ENCODE measurements at regions of chr16 and their contacts with region 1.

Region 1: DNA sequence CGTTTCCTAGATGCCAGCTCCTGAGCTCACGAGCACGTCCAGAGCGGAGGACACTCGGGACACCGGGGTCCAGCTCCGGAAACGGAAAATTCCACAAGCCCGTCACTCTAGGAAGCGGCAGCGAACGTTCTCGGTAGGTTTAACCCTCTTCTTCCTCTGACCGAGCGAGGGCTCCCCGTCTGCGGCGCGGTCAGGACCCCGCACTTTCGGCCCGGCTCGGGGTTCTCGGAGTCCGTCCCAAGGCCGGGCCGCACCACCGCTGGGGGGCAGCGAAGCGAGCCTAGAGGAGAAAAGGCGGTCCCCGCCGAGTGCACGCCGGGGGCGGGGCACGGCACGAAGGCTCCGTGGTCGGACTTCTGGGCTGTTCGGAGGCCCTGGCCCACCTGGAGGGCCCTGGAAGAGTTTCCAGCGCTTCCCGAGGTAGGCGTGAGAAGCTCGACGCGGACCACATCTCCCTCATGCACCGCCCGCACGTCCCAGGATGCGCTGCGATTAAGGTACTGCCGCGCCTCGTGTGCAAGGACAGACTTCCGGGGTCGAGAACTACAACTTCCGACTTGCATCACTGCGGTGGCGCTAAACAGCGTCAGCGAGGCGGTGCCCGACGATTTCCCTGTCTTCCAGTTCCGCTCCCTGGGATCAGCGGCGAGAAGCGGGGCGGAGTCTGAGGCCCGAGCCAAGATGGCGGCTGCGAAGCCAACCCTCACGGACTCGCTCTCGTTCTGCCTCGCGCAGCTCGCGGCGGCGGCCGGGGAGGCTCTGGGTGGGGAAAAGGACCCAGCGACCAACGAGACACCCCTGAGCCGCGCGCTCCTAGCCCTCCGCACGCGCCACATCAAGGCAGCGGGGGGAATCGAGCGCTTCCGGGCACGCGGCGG is at the start of gene ARMC5:
- DNase-seq: peak; percentile 93
- ATAC-seq: peak; percentile 75
- H3K4me3 Mint-ChIP-seq: peak within 1 kb of the TSS; percentile 91
- H3K27ac Mint-ChIP-seq: peak within 1 kb of the TSS; percentile 98
- H3K4me1 Mint-ChIP-seq: peaks cover 50% of the 10 kb centered on the region
- H3K27me3 Mint-ChIP-seq: no peaks in the 10 kb centered on the region
- CTCF ChIP-seq: no peak
- total RNA-seq, gene ARMC5: 10.9 TPM in 2 replicates

Region 2: GRCh38 chr16:30957456-30958174 is 501.5 kb before region 1 on chr16 and contains the start of gene SETD1A:
- CTCF ChIA-PET with region 1: no interaction called
- POLR2A ChIA-PET with region 1: interaction called, 4 read pairs
- intact Hi-C with region 1: loop called (anchors 1 kb)
- DNase-seq: peak; percentile 89
- ATAC-seq: peak; percentile 87
- H3K4me3 Mint-ChIP-seq: peak within 1 kb of the TSS; percentile 95
- H3K27ac Mint-ChIP-seq: peak within 1 kb of the TSS; percentile 99
- H3K4me1 Mint-ChIP-seq: peaks cover 31% of the 10 kb centered on the region
- H3K27me3 Mint-ChIP-seq: no peaks in the 10 kb centered on the region
- CTCF ChIP-seq: no peak
- total RNA-seq, gene SETD1A: 29.6 and 32.8 TPM in 2 replicates

Region 3: GRCh38 chr16:31117391-31118197 is 341.5 kb before region 1 on chr16 and contains the start of gene KAT8:
- CTCF ChIA-PET with region 1: no interaction called
- POLR2A ChIA-PET with region 1: interaction called, 14 read pairs
- intact Hi-C with region 1: loop called (anchors 2 kb)
- DNase-seq: peak; percentile 92
- ATAC-seq: peak; percentile 94
- H3K4me3 Mint-ChIP-seq: peak within 1 kb of the TSS; percentile 85
- H3K27ac Mint-ChIP-seq: peak within 1 kb of the TSS; percentile 85
- H3K4me1 Mint-ChIP-seq: peaks cover 22% of the 10 kb centered on the region
- H3K27me3 Mint-ChIP-seq: no peaks in the 10 kb centered on the region
- CTCF ChIP-seq: no peak
- total RNA-seq, gene KAT8: 82.1 and 93.7 TPM in 2 replicates

Region 4: GRCh38 chr16:31472709-31473203 is 13.7 kb after region 1 on chr16:
- CTCF ChIA-PET with region 1: interaction called, 4 read pairs
- POLR2A ChIA-PET with region 1: interaction called, 27 read pairs
- intact Hi-C with region 1: loop called (anchors 1 kb)
- DNase-seq: no peak
- ATAC-seq: no peak
- H3K4me3 Mint-ChIP-seq: peak overlapping the region; percentile 78
- H3K27ac Mint-ChIP-seq: no peak overlapping the region
- H3K4me1 Mint-ChIP-seq: peaks cover 43% of the 10 kb centered on the region
- H3K27me3 Mint-ChIP-seq: no peaks in the 10 kb centered on the region
- CTCF ChIP-seq: no peak

Region 5: DNA sequence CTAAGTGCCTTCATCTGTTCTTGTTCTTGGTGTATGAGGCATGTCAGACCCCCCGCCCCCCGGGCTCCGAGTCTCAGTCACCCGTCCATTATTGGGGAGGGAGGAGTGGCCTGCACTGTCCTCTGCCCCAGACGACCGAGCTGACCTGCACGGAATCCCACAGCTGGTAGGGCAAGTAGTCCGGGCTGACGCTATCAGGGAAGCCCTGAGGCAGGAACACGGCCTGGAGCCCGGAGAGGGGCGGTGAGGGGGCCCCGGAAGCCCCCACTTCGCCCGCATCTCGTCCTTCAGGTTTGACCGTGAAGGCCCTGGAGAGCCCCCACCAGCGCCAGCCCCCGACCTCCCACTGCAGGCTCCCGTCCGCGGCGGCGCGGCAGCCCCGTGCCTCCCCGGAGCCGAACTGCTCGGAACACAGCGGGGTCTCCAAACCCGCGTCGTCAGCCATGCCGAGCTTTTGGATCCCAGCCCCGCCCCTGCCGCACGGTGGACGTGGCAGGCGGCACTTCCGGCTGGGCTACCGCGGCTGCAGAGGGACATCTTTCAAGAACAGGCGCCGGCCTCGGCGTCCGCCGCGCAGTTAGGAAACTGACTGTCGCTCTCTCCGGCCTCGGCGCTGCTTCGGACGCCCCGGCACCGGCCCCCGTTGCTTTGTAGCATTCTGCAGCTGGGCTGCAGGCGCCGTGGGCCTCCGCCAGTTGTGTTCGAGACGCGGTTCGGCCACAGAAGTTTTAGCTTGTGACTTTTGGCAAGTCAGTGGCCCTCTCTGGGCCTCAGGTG is 49.0 kb after region 1 on chr16 and contains the start of gene RUSF1:
- CTCF ChIA-PET with region 1: no interaction called
- POLR2A ChIA-PET with region 1: interaction called, 31 read pairs
- intact Hi-C with region 1: loop called (anchors 1 kb)
- DNase-seq: peak; percentile 81
- ATAC-seq: peak; percentile 94
- H3K4me3 Mint-ChIP-seq: peak within 1 kb of the TSS; percentile 94
- H3K27ac Mint-ChIP-seq: peak within 1 kb of the TSS; percentile 94
- H3K4me1 Mint-ChIP-seq: peaks cover 55% of the 10 kb centered on the region
- H3K27me3 Mint-ChIP-seq: no peaks in the 10 kb centered on the region
- CTCF ChIP-seq: no peak
- total RNA-seq, gene RUSF1: 58.6 and 59.7 TPM in 2 replicates

Region 6: GRCh38 chr16:31873556-31874365 is 414.7 kb after region 1 on chr16 and contains the start of gene ZNF267:
- CTCF ChIA-PET with region 1: interaction called, 4 read pairs
- POLR2A ChIA-PET with region 1: interaction called, 35 read pairs
- intact Hi-C with region 1: loop called (anchors 1 kb)
- DNase-seq: peak; percentile 79
- ATAC-seq: peak; percentile 69
- H3K4me3 Mint-ChIP-seq: peak within 1 kb of the TSS; percentile 83
- H3K27ac Mint-ChIP-seq: peak within 1 kb of the TSS; percentile 87
- H3K4me1 Mint-ChIP-seq: peaks cover 83% of the 10 kb centered on the region
- H3K27me3 Mint-ChIP-seq: no peaks in the 10 kb centered on the region
- CTCF ChIP-seq: no peak
- total RNA-seq, gene ZNF267: 93.5 and 99.0 TPM in 2 replicates